ENCODE measurements at regions of chr2 and their contacts with region 1.

Region 1: GRCh38 chr2:203463266-203463678 is 71.8 kb downstream of the RAPH1 start:
- DNase-seq: no peak
- ATAC-seq: no peak
- H3K4me3 Mint-ChIP-seq: no peak overlapping the region
- H3K27ac Mint-ChIP-seq: no peak overlapping the region
- H3K4me1 Mint-ChIP-seq: no peaks in the 10 kb centered on the region
- H3K27me3 Mint-ChIP-seq: peaks cover 9% of the 10 kb centered on the region
- CTCF ChIP-seq: no peak

Region 2: DNA sequence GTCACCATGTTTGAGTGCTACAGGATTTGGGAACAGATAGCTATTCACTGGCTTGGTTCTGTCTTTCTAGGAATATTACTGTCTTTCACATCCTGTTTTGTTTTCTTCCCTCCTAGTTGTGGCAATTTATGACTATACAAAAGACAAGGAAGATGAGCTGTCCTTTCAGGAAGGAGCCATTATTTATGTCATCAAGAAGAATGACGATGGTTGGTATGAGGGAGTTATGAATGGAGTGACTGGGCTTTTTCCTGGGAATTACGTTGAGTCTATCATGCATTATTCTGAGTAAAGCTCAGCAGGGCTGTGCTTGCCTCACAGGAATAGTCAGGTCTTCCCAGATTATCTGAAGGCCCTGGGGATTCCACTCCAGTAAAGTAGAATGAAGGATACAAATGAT is 36.2 kb before region 1 on chr2:
- CTCF ChIA-PET with region 1: no interaction called
- POLR2A ChIA-PET with region 1: no interaction called
- intact Hi-C with region 1: no loop called
- DNase-seq: no peak
- ATAC-seq: no peak
- H3K4me3 Mint-ChIP-seq: no peak overlapping the region
- H3K27ac Mint-ChIP-seq: no peak overlapping the region
- H3K4me1 Mint-ChIP-seq: no peaks in the 10 kb centered on the region
- H3K27me3 Mint-ChIP-seq: no peaks in the 10 kb centered on the region
- CTCF ChIP-seq: no peak

Region 3: GRCh38 chr2:203510256-203510940 is 47.1 kb after region 1 on chr2:
- CTCF ChIA-PET with region 1: no interaction called
- POLR2A ChIA-PET with region 1: interaction called, 11 read pairs
- intact Hi-C with region 1: no loop called
- DNase-seq: no peak
- ATAC-seq: no peak
- H3K4me3 Mint-ChIP-seq: no peak overlapping the region
- H3K27ac Mint-ChIP-seq: no peak overlapping the region
- H3K4me1 Mint-ChIP-seq: no peaks in the 10 kb centered on the region
- H3K27me3 Mint-ChIP-seq: peaks cover 5% of the 10 kb centered on the region
- CTCF ChIP-seq: no peak